ENCODE measurements at regions of chr17 and their contacts with region 1.

Region 1: DNA sequence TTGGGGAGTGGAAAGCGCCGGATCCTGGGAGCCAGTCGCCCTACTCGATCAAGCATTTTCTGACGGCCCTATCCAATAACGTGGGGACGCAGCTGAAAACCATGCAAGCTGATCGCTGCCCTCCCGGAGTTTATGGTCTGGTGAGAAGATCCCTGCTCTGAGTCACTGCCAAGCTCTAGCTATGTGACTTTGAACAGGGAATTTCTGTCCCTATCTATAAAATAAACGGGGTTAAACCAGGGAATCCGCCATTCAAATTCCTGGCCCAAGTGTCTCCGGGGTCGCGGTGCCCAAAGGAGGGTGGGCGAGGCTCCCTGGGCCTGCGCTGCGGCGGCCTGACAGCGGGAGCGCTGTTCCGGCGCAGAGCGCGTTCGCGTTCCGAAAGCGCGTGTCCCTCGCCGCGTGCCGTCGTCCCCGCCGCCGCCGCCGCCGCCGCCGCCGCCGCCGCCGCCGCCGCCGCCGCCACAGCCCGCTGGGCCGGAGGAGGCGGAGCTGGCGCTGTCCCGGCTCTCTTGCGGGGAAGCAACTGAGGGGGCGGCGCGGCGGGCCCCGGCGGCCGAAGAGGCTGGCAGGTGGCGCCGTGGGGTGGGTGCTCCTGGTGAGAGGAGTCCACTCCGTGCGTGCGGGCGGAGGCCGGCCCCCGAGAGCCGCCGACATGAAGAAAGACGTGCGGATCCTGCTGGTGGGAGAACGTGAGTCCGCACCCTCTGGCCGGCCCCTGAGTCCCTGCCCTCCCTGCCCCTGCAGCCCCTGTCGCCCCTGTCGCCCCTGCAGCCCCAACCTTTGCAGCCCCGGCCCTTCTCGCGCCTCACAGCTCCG is at the start of gene RHOT1:
- DNase-seq: peak; percentile 94
- H3K4me3 Mint-ChIP-seq: peak within 1 kb of the TSS; percentile 96
- H3K27ac Mint-ChIP-seq: peak within 1 kb of the TSS; percentile 84
- H3K4me1 Mint-ChIP-seq: peaks cover 27% of the 10 kb centered on the region
- H3K27me3 Mint-ChIP-seq: no peaks in the 10 kb centered on the region
- total RNA-seq, gene RHOT1: 26.7 and 27.8 TPM in 2 replicates

Region 2: GRCh38 chr17:31787857-31788570 is 354.2 kb before region 1 on chr17:
- intact Hi-C with region 1: no loop called
- DNase-seq: no peak
- H3K4me3 Mint-ChIP-seq: no peak overlapping the region
- H3K27ac Mint-ChIP-seq: no peak overlapping the region
- H3K4me1 Mint-ChIP-seq: no peaks in the 10 kb centered on the region
- H3K27me3 Mint-ChIP-seq: peaks cover 12% of the 10 kb centered on the region

Region 3: GRCh38 chr17:32006957-32007462 is 135.2 kb before region 1 on chr17 and contains the start of gene LRRC37B:
- intact Hi-C with region 1: loop called (anchors 2 kb)
- DNase-seq: peak; percentile 98
- H3K4me3 Mint-ChIP-seq: peak within 1 kb of the TSS; percentile 91
- H3K27ac Mint-ChIP-seq: peak within 1 kb of the TSS; percentile 90
- H3K4me1 Mint-ChIP-seq: peaks cover 30% of the 10 kb centered on the region
- H3K27me3 Mint-ChIP-seq: no peaks in the 10 kb centered on the region
- total RNA-seq, gene LRRC37B: 17.7 and 22.1 TPM in 2 replicates

Region 4: GRCh38 chr17:32127158-32127897 is 14.9 kb before region 1 on chr17:
- intact Hi-C with region 1: loop called (anchors 1 kb)
- DNase-seq: peak; percentile 97
- H3K4me3 Mint-ChIP-seq: peak overlapping the region; percentile 97
- H3K27ac Mint-ChIP-seq: peak overlapping the region; percentile 97
- H3K4me1 Mint-ChIP-seq: peaks cover 27% of the 10 kb centered on the region
- H3K27me3 Mint-ChIP-seq: no peaks in the 10 kb centered on the region